ENCODE measurements at regions of chr16 and their contacts with region 1.

Region 1: DNA sequence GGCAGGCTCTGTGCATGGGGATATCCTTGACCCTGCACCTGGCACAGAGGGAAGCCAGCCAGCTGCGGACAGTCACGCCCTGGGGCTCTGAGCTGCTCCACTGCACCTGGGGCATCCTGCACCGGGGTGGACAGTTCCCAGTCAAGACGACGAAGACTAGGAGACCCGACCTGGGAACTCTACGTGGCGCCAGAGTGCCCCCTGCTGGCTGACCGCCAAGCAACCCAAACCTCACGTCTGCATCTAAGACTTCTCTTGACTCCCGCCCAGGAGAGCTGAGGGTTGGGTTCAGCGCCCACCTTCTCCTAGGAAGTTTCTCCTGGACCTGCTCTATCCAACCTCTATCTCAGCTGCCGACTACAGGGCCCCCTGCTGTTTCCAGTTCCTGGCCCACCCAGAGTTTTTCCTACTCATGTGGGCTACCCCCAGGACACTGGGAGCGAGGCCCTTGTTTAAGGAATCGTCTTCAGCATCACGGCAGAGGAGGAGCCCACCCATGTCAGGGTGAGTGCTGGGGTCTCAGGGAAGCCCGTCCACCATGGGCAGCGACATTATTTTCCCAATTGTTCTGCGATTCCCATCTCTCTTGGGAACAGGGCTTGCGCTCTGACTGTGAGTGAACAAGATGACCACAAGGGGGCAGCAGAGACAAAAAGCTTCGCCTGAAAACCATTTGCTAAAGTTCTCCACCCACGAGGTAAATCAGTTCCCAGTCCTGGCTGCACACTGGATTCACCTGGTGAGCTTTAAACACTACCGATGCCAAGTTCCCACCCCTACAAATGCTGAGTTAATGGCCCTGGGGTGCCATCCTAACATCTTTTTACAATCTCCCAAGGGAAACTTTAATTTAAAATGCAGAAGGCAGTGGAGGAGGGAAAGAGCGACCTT is 29.3 kb downstream of the TLE7 start:
- DNase-seq: peak; percentile 74 to 81 (median 76)
- ATAC-seq: peak; percentile 97
- H3K4me3 ChIP-seq: no peak overlapping the region
- H3K27ac ChIP-seq: no peak overlapping the region
- H3K4me1 ChIP-seq: peaks cover 0 to 10% of the 10 kb centered on the region in 2 experiments; a peak in 3 of 5 replicates
- H3K27me3 ChIP-seq: peaks cover 4 to 19% of the 10 kb centered on the region in 2 experiments
- CTCF ChIP-seq: peak; percentile 82 to 90 (median 89)
- EP300 ChIP-seq: no peak
- POLR2A ChIP-seq: no peak
- RAD21 ChIP-seq: peak; percentile 69 to 73

Region 2: DNA sequence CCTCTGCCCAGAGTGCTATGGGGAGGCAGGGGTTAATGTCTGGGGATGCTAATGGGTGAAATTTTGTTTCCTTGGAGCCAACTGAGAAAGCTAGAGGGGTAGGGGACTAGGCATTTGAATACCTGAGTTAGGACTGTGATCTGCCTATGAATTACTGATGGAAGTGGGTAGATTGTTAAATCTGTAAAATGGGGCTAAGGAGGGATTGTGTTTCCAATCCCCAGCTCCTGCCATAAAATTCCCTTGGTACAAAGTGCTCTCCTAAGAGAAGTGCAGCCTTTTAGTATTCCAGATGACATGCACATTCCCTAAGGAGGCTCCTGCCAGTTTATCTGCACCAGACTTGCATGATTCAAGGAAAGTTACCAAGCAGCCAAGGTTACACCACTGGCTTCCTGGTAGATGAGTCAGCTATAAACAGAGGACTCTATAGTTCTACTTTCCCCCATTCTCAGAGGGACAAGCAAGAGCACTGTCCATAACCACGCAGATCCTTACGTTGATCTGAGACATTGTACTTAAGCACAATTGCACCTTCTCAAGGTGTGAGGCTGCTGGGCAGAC is 52.2 kb before region 1 on chr16:
- CTCF ChIA-PET with region 1: no interaction called
- POLR2A ChIA-PET with region 1: interaction called, 3 read pairs
- in situ Hi-C with region 1: no loop called
- intact Hi-C with region 1: loop called (anchors 2 kb)
- DNase-seq: peak in 3 of 4 experiments; percentile 20 to 37 (median 21)
- ATAC-seq: peak; percentile 26; the same call in 1 of the 3 replicates
- H3K4me3 ChIP-seq: no peak overlapping the region
- H3K27ac ChIP-seq: no peak overlapping the region
- H3K4me1 ChIP-seq: peaks cover 8 to 9% of the 10 kb centered on the region in 2 experiments; a peak in 4 of 5 replicates
- H3K27me3 ChIP-seq: peaks cover 6 to 37% of the 10 kb centered on the region in 2 experiments; a peak in 4 of 5 replicates
- CTCF ChIP-seq: no peak
- EP300 ChIP-seq: no peak
- POLR2A ChIP-seq: no peak
- RAD21 ChIP-seq: no peak

Region 3: GRCh38 chr16:71441348-71441781 is 28.9 kb after region 1 on chr16:
- CTCF ChIA-PET with region 1: interaction called, 10 read pairs
- POLR2A ChIA-PET with region 1: no interaction called
- in situ Hi-C with region 1: no loop called
- intact Hi-C with region 1: loop called (anchors 2 kb)
- DNase-seq: peak in 2 of 4 experiments; percentile 27 to 31
- ATAC-seq: peak; percentile 70
- H3K4me3 ChIP-seq: no peak overlapping the region
- H3K27ac ChIP-seq: no peak overlapping the region
- H3K4me1 ChIP-seq: peaks cover 0 to 8% of the 10 kb centered on the region in 2 experiments; a peak in 2 of 5 replicates
- H3K27me3 ChIP-seq: peaks cover 10 to 15% of the 10 kb centered on the region in 2 experiments; a peak in 4 of 5 replicates
- CTCF ChIP-seq: peak; percentile 18 to 30 (median 24); a peak in 1 of 6 replicates
- EP300 ChIP-seq: no peak
- POLR2A ChIP-seq: no peak
- RAD21 ChIP-seq: no peak

Region 4: DNA sequence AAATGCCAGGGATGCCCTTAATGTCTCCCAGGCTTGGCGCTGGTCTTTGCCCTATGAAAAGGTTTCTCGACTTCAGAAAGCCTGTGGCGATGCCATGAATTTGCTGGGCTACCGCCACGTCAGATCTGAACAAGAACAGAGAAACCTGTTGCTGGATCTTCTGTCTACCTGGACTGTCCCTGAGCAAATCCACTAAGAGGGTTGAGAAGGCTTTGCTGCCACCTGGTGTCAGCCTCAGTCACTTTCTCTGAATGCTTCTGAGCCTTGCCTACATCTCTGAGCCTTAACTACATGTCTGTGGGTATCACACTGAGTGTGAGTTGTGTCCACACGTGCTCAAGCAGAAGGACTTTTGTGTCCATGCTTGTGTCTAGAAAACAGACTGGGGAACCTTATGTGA is 125.1 kb after region 1 on chr16:
- CTCF ChIA-PET with region 1: interaction called, 6 read pairs
- POLR2A ChIA-PET with region 1: no interaction called
- in situ Hi-C with region 1: no loop called
- intact Hi-C with region 1: loop called (anchors 2 kb)
- DNase-seq: peak; percentile 47 to 64 (median 55)
- ATAC-seq: peak; percentile 90
- H3K4me3 ChIP-seq: no peak overlapping the region
- H3K27ac ChIP-seq: no peak overlapping the region
- H3K4me1 ChIP-seq: no peaks in the 10 kb centered on the region
- H3K27me3 ChIP-seq: peaks cover 9 to 21% of the 10 kb centered on the region in 2 experiments
- CTCF ChIP-seq: peak; percentile 72 to 73 (median 72)
- EP300 ChIP-seq: no peak
- POLR2A ChIP-seq: no peak
- RAD21 ChIP-seq: peak; percentile 33 to 73

Region 5: GRCh38 chr16:71610936-71611871 is 198.7 kb after region 1 on chr16:
- CTCF ChIA-PET with region 1: interaction called, 15 read pairs
- POLR2A ChIA-PET with region 1: no interaction called
- in situ Hi-C with region 1: no loop called
- intact Hi-C with region 1: loop called (anchors 2 kb)
- DNase-seq: peak; percentile 80 to 91 (median 87)
- ATAC-seq: peak; percentile 99
- H3K4me3 ChIP-seq: no peak overlapping the region
- H3K27ac ChIP-seq: no peak overlapping the region
- H3K4me1 ChIP-seq: peaks cover 0 to 3% of the 10 kb centered on the region in 2 experiments; a peak in 1 of 5 replicates
- H3K27me3 ChIP-seq: peaks cover 3 to 17% of the 10 kb centered on the region in 2 experiments; a peak in 3 of 5 replicates
- CTCF ChIP-seq: peak; percentile 90 to 97 (median 95)
- EP300 ChIP-seq: no peak
- POLR2A ChIP-seq: no peak
- RAD21 ChIP-seq: peak; percentile 77 to 87

Measured in K562 (cell line).